Mammary epithelial cell (primary cell): ENCODE measurements at regions of chr11 and their contacts with region 1.

Region 1: GRCh38 chr11:34890812-34891211 is 25.4 kb downstream of the APIP start:
- DNase-seq: peak; percentile 21
- H3K4me3 ChIP-seq: no peak overlapping the region
- H3K27ac ChIP-seq: no peak overlapping the region
- H3K4me1 ChIP-seq: no peaks in the 10 kb centered on the region
- H3K27me3 ChIP-seq: no peaks in the 10 kb centered on the region
- CTCF ChIP-seq: peak; percentile 39 to 54

Region 2: DNA sequence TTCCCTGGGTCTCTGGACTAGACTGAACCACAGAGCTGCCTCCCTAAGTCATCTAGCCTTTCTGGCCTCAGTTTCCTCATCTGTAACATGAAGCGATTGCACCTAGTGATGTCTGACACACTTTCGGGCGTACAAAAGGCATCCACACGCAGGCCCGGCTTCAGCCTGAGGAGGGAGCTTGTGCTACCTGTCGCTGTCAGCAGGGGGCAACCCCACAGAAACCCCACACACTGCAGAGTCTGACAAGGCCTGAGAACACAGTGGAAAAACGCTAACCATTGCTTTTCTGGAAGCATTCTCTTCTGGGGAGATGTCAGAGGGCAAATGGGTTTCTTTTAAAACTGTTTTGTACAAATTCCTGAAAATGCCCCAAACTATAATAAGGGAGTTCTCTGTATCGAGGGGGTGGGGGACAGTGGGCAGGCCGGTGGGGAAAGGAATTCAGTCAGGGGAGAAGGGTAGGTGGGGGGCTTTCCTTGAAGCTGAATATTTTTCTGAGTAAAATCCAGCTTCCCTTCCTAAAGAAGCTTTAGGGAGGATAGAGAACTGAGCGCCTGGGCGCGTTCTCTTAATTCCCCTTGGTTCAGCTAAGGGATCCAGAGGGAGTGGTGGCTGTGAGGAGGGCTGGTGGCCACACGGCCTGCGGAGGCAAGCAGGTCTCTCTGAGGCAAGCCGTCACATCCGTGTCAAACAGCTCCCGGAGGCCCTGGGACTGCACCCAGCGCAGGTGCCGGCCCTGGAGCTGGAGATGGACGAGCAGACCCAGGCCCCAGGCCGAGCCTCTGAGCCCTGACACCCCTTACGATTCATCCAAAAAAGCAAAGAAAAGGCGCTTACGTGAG is 377.8 kb before region 1 on chr11:
- CTCF ChIA-PET with region 1: no interaction called
- dilution Hi-C with region 1: loop called (anchors 5 kb)
- in situ Hi-C with region 1: loop called (anchors 10 kb)
- intact Hi-C with region 1: loop called (anchors 1 kb)
- DNase-seq: peak; percentile 29
- H3K4me3 ChIP-seq: no peak overlapping the region
- H3K27ac ChIP-seq: no peak overlapping the region
- H3K4me1 ChIP-seq: no peaks in the 10 kb centered on the region
- H3K27me3 ChIP-seq: no peaks in the 10 kb centered on the region
- CTCF ChIP-seq: peak; percentile 88 to 92

Region 3: DNA sequence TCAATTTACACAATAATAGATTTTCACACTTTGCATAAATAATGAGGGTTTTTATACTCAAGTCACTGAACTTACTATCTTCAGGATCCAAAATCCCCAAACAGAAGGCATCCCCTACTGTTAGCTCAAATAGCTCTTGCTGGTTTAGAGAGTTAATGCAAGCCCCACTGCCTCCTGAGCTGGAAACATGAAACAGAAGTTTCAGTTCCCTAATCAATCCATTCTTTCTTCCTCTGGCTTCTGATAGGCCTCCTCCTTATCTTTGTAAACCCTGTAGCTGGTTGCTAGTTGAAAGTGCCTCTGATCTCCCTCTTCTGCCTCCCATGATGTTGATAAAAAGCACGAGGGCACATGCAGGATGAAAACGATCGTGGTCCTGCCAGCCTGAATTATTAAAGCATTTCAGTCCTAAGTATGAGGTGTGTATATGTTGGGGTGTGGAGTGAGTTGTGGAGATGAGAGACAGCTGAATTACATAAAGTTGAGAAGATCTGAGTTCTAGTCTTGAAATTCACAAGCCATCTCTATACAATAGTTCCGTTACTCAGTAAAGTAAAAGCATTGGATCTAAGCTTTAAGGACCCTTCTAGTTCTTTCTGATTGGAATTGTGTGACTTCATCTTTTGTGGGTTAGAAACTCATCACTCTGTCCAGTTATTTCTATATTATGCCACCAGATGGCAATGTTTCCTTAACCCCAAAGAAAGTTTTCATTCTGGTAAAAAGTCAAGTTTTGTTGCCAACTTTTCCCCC is 304.9 kb before region 1 on chr11:
- CTCF ChIA-PET with region 1: interaction called, 7 read pairs
- dilution Hi-C with region 1: no loop called
- in situ Hi-C with region 1: loop called (anchors 5 kb)
- intact Hi-C with region 1: loop called (anchors 1 kb)
- DNase-seq: peak; percentile 55
- H3K4me3 ChIP-seq: no peak overlapping the region
- H3K27ac ChIP-seq: no peak overlapping the region
- H3K4me1 ChIP-seq: no peaks in the 10 kb centered on the region
- H3K27me3 ChIP-seq: no peaks in the 10 kb centered on the region
- CTCF ChIP-seq: peak; percentile 52 to 70

Region 4: DNA sequence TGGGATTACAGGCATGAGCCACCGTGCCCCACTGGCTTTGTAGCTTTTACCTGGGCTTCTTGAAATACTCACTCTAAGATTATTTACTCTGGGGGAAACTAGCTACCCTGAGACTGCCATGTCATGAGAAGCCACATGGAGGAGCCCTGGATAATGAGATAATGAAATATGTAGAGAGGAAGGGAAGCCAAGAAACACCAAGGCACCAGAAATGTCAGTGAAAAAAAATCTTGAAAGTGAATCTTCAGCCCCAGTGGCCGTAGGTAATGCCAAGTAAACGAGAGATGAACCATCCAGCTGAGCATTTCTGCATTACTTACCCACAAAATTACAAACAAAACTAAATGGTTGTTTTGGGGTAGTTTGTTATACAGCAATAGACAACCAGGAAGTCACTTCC is 100.2 kb before region 1 on chr11:
- CTCF ChIA-PET with region 1: no interaction called
- dilution Hi-C with region 1: no loop called
- in situ Hi-C with region 1: no loop called
- intact Hi-C with region 1: loop called (anchors 1 kb)
- DNase-seq: peak; percentile 23
- H3K4me3 ChIP-seq: no peak overlapping the region
- H3K27ac ChIP-seq: no peak overlapping the region
- H3K4me1 ChIP-seq: no peaks in the 10 kb centered on the region
- H3K27me3 ChIP-seq: no peaks in the 10 kb centered on the region
- CTCF ChIP-seq: peak; percentile 19 to 58

Region 5: DNA sequence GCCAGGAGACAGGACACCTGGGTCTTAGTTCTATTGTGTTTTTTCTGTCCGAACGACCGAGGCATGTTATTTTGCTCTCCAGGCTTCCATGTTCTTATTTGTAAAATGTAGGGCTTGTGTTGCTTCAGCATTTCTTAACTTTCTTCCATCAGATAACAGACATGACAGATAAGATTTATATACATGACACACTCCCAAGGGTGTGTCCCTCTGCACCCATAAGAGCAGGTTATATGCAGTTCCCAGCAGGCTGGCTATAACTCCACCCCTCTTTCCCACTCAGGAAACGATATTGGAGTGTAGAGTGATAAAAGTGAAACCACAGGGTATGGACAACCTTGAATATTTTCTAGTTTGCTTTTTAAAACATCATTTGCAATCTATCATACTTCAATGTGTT is 40.5 kb before region 1 on chr11:
- CTCF ChIA-PET with region 1: no interaction called
- dilution Hi-C with region 1: no loop called
- in situ Hi-C with region 1: no loop called
- intact Hi-C with region 1: no loop called
- DNase-seq: peak; percentile 33
- H3K4me3 ChIP-seq: no peak overlapping the region
- H3K27ac ChIP-seq: no peak overlapping the region
- H3K4me1 ChIP-seq: no peaks in the 10 kb centered on the region
- H3K27me3 ChIP-seq: peaks cover 3% of the 10 kb centered on the region
- CTCF ChIP-seq: no peak